CD4-positive, alpha-beta memory T cell (primary cell): ENCODE measurements at regions of chr5 and their contacts with region 1.

Region 1: GRCh38 chr5:91225848-91226686 is 157.1 kb downstream of the ARRDC3 start:
- DNase-seq: peak; percentile 52 to 58 (median 58)
- H3K4me3 ChIP-seq: no peak overlapping the region
- H3K4me3 Mint-ChIP-seq: peak overlapping the region in 1 of 8 donors; percentile 4
- H3K27ac ChIP-seq: no peak overlapping the region
- H3K27ac Mint-ChIP-seq: no peak overlapping the region
- H3K4me1 ChIP-seq: no peaks in the 10 kb centered on the region
- H3K4me1 Mint-ChIP-seq: no peaks in the 10 kb centered on the region
- H3K27me3 ChIP-seq: no peaks in the 10 kb centered on the region
- H3K27me3 Mint-ChIP-seq: peaks cover 0 to 6% of the 10 kb centered on the region in 2 donors

Region 2: DNA sequence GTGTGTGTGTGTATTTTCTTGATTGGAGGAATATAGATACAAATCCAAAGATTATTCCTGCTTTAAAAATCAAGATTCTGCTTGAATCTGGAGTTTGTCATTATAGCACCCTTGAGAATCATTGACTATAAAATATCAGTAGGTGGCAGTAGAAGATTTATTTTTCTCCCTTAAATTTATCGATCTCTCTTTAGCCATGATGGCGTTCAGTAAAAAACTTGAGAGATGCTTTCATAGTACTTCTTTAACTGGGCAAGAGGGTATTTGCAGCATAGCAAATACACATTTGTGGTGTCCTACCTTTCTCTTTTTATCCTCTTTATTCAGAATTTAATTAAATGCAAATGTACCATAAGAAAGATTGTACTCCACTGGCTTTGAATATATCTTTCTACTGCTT is 359.7 kb before region 1 on chr5:
- CTCF ChIA-PET with region 1: no interaction called
- POLR2A ChIA-PET with region 1: no interaction called
- intact Hi-C with region 1: loop called (anchors 5 kb)
- DNase-seq: peak in 4 of 5 donors; percentile 19 to 30 (median 21)
- H3K4me3 ChIP-seq: no peak overlapping the region
- H3K4me3 Mint-ChIP-seq: no peak overlapping the region
- H3K27ac ChIP-seq: no peak overlapping the region
- H3K27ac Mint-ChIP-seq: no peak overlapping the region
- H3K4me1 ChIP-seq: no peaks in the 10 kb centered on the region
- H3K4me1 Mint-ChIP-seq: no peaks in the 10 kb centered on the region
- H3K27me3 ChIP-seq: no peaks in the 10 kb centered on the region
- H3K27me3 Mint-ChIP-seq: peaks cover 10 to 13% of the 10 kb centered on the region in 2 donors

Region 3: GRCh38 chr5:91101600-91102379 is 124.3 kb before region 1 on chr5:
- CTCF ChIA-PET with region 1: no interaction called
- POLR2A ChIA-PET with region 1: no interaction called
- intact Hi-C with region 1: loop called (anchors 5 kb)
- DNase-seq: peak; percentile 23 to 49 (median 35)
- H3K4me3 ChIP-seq: no peak overlapping the region
- H3K4me3 Mint-ChIP-seq: no peak overlapping the region
- H3K27ac ChIP-seq: no peak overlapping the region
- H3K27ac Mint-ChIP-seq: no peak overlapping the region
- H3K4me1 ChIP-seq: no peaks in the 10 kb centered on the region
- H3K4me1 Mint-ChIP-seq: no peaks in the 10 kb centered on the region
- H3K27me3 ChIP-seq: no peaks in the 10 kb centered on the region
- H3K27me3 Mint-ChIP-seq: peaks cover 4 to 5% of the 10 kb centered on the region in 2 donors

Region 4: GRCh38 chr5:91280362-91281269 is 54.5 kb after region 1 on chr5:
- CTCF ChIA-PET with region 1: interaction called, 4 read pairs
- POLR2A ChIA-PET with region 1: no interaction called
- intact Hi-C with region 1: loop called (anchors 5 kb)
- DNase-seq: peak; percentile 76 to 90 (median 80)
- H3K4me3 ChIP-seq: peak overlapping the region; percentile 74 to 91
- H3K4me3 Mint-ChIP-seq: peak overlapping the region; percentile 85 to 99 (median 93)
- H3K27ac ChIP-seq: peak overlapping the region; percentile 37
- H3K27ac Mint-ChIP-seq: peak overlapping the region; percentile 80 to 97 (median 94)
- H3K4me1 ChIP-seq: peaks cover 14% of the 10 kb centered on the region
- H3K4me1 Mint-ChIP-seq: peaks cover 13 to 24% (median 19%) of the 10 kb centered on the region in 4 donors
- H3K27me3 ChIP-seq: no peaks in the 10 kb centered on the region
- H3K27me3 Mint-ChIP-seq: no peaks in the 10 kb centered on the region

Region 5: GRCh38 chr5:91311697-91312501 is 85.8 kb after region 1 on chr5:
- CTCF ChIA-PET with region 1: interaction called, 10 read pairs
- POLR2A ChIA-PET with region 1: interaction called, 3 read pairs
- intact Hi-C with region 1: loop called (anchors 1 kb)
- DNase-seq: peak; percentile 75 to 87 (median 81)
- H3K4me3 ChIP-seq: peak overlapping the region in 1 of 2 donors; percentile 25
- H3K4me3 Mint-ChIP-seq: peak overlapping the region; percentile 55 to 87 (median 74)
- H3K27ac ChIP-seq: peak overlapping the region; percentile 43
- H3K27ac Mint-ChIP-seq: peak overlapping the region; percentile 94 to 98 (median 97)
- H3K4me1 ChIP-seq: peaks cover 46% of the 10 kb centered on the region
- H3K4me1 Mint-ChIP-seq: peaks cover 35 to 53% (median 36%) of the 10 kb centered on the region in 4 donors
- H3K27me3 ChIP-seq: no peaks in the 10 kb centered on the region
- H3K27me3 Mint-ChIP-seq: peaks cover 0 to 2% of the 10 kb centered on the region in 2 donors

Region 6: DNA sequence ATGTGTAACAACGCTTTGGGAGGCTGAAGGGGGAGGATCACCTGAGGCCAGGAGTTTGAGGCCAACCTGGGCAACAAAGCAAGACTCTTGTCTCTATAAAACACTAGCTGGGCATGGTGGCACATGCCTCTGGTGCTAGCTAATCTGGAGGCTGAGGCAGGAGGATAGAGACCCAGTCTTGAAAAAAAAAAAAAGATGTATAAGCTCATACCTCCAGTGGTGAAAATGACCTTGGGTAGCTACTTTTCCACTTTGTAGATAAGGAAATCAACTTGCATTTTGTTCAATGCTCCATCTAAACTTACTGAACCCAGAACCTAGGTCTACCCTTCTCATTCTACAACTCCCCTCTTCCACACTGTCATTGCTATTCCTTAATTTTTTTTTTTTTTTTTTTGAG is 140.5 kb after region 1 on chr5:
- CTCF ChIA-PET with region 1: interaction called, 11 read pairs
- POLR2A ChIA-PET with region 1: interaction called, 3 read pairs
- intact Hi-C with region 1: no loop called
- DNase-seq: no peak
- H3K4me3 ChIP-seq: no peak overlapping the region
- H3K4me3 Mint-ChIP-seq: no peak overlapping the region
- H3K27ac ChIP-seq: no peak overlapping the region
- H3K27ac Mint-ChIP-seq: no peak overlapping the region
- H3K4me1 ChIP-seq: no peaks in the 10 kb centered on the region
- H3K4me1 Mint-ChIP-seq: peaks cover 9 to 21% (median 14%) of the 10 kb centered on the region in 4 donors
- H3K27me3 ChIP-seq: no peaks in the 10 kb centered on the region
- H3K27me3 Mint-ChIP-seq: no peaks in the 10 kb centered on the region